Astrocyte of the cerebellum (primary cell): ENCODE measurements at regions of chr12 and their contacts with region 1.

Region 1: DNA sequence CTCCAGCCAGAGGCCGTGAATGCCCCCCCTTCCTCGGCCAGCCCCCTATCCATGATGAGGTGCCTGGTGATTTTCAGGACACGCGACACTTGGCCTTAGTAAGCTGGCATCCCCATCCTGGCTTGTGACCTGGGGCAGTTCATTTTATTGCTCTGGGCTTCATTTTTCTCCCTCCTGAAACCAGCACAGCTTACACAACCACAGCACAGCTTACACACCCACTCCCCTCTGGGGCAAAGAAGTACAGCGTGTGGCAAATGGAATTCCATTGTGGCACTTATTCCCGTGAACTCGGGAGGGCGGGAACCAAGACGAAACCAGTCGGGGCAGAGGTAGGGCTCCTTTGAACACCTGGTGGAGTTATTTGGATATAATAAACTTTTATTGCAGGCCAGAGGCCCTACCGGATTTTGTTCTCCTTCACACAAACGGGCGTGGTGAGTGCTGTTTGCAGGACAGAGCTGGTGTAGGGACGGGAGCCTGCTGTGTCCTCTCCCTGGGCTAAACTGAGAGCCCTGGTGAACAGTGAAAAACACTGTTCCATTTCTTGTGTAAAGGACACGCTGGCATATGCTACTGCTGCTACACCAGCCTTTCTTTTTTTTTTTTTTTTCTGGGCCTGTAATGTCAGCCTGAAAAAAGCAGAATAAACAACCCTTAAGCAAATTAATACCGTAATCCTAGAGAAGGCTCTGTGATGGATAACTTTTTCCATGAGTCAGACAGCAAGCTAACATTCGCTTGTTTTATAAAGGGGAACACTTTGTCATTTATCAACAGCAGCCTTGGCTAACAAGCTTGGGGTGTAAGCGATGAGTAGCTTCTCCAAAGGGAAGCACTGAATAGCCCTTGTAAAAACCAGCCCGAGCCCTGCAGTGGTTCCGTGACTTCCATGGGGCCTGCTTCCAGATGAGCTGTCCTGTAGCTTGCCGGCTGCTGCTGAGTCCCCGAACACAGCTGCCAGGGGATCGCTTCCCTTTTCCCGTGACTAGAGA is 29.3 kb downstream of the CD9 start:
- DNase-seq: peak; percentile 59
- H3K4me3 ChIP-seq: no peak overlapping the region
- CTCF ChIP-seq: no peak

Region 2: GRCh38 chr12:6272300-6273204 is 43.0 kb after region 1 on chr12:
- in situ Hi-C with region 1: loop called (anchors 5 kb)
- DNase-seq: no peak
- H3K4me3 ChIP-seq: no peak overlapping the region
- CTCF ChIP-seq: no peak

Region 3: DNA sequence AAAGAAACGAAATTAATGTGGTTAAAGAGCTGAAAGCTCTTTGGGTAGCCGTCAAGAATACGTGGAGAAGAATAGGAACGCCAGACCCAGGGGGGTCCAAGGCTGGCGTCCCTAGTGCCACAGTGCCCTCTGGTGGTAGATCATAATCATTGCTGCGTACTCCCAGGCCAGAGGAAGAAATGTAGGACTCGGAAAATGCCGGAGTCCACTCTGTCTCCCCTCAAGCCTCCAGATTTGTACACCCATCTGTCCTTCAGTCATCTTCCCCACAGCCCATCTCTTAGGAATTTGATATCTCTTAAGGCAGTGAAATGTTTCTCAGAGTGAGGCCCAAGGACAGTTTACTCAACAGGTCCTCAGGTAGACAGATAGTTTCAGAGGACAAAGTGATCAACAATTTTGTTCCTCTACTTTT is 55.5 kb after region 1 on chr12:
- in situ Hi-C with region 1: no loop called
- DNase-seq: peak; percentile 52
- H3K4me3 ChIP-seq: no peak overlapping the region
- CTCF ChIP-seq: peak; percentile 87

Region 4: DNA sequence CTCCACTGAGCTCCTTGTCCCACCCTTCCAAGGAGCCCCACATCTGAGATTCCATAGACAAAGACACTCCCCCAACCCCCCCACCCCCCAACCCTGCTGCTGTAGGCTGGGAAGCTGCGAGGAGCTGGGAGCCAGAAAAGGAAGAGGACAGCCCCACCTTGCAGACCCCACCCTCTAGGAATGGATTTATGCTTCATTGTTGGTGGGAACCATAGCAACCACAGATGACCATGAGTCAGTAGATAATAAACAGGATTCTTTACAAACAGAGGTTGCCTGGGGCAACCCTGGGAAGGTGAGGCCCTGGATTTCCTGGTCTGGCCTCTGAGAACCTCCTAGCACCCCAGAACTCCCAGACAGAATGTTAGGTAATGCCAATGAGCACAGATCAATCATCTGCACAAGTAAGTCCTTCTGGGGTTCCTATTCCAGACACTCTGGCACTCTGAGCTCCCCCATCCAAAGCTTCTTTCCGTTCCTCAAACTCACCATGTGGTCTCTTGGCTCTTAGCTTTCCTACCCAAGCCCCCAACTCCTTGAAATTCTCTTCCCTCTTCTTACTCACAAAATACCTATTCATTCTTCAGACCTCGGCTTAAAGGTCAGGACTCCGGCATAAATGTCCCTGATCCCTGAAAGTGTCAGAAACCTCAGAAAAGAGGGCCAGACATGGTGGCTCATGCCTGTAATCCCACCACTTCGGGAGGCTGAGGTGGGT is 65.7 kb after region 1 on chr12:
- in situ Hi-C with region 1: no loop called
- DNase-seq: peak; percentile 55
- H3K4me3 ChIP-seq: no peak overlapping the region
- CTCF ChIP-seq: no peak

Region 5: DNA sequence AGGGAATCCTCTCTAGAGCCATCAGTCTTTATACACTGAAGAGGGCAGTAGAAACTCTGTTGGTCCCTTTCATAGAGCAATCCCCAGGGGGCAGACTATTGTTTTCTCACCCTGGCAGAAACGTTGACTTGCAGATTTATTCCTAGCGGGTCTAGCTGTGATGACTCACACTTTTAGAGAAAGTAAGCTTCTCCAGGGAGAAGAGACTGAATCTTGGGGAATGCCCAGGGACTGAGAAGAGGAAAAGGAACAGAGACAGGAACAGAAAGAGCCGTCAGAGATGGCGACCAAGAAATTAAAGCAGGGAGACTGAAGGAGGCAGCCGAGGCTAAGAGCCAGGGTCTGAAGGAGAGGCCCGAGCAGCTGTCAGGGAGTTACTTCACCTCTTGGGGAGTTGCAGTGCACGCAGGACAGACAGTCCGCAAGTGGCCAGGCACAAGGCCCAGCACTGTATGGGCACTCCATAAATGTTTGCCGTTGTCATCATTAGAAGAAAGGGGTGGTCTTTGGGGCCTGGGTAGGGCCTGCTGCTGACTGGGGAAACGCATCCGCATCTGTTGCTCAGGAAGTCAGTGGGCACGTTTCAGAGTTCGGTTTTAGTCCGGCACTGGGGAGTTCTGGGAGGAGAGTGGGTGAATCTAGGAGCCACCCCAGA is 93.9 kb after region 1 on chr12:
- in situ Hi-C with region 1: no loop called
- DNase-seq: peak; percentile 86
- H3K4me3 ChIP-seq: no peak overlapping the region
- CTCF ChIP-seq: peak; percentile 64

Region 6: DNA sequence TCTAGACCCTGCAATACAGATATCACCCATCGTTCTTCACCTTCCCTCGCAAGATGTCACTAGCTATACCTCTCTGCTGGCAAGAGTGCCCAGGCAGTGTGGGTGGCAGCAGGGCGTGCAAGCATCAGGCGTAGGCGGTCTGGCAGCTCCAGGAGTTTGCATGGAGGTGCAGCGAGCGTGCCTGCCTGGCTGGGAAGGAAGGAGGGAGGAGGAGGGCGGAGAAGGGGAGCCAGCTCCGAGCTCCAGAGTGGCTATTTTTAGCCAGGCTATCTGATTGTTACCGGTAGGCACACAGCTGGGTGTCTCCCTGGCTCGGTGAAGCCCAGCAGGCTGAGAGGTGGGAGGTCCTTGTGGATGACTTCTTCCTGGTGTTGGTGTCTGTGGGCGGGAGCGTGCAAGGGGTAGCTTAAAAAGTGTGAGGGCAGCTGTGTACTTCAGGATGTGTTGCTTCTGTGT is 1809.2 kb after region 1 on chr12:
- in situ Hi-C with region 1: no loop called
- DNase-seq: no peak
- H3K4me3 ChIP-seq: peak overlapping the region; percentile 27
- CTCF ChIP-seq: no peak